Gastrocnemius medialis (tissue), 4 donors: ENCODE measurements at regions of chr2 and their contacts with region 1.

Region 1: GRCh38 chr2:20446917-20447436 is at the start of gene RHOB:
- DNase-seq: peak; percentile 97 to 99
- ATAC-seq: peak; percentile 73 to 84
- H3K4me3 ChIP-seq: peak within 1 kb of the TSS; percentile 86 to 99 (median 94)
- H3K27ac ChIP-seq: peak within 1 kb of the TSS; percentile 87 to 96 (median 91)
- H3K4me1 ChIP-seq: peaks cover 19 to 20% of the 10 kb centered on the region in 2 donors
- H3K27me3 ChIP-seq: no peaks in the 10 kb centered on the region
- CTCF ChIP-seq: peak in 1 of 5 experiments; percentile 4
- POLR2A ChIP-seq: peak; percentile 100
- total RNA-seq, gene RHOB: 696 to 1,267 (median 1,094) TPM

Region 2: DNA sequence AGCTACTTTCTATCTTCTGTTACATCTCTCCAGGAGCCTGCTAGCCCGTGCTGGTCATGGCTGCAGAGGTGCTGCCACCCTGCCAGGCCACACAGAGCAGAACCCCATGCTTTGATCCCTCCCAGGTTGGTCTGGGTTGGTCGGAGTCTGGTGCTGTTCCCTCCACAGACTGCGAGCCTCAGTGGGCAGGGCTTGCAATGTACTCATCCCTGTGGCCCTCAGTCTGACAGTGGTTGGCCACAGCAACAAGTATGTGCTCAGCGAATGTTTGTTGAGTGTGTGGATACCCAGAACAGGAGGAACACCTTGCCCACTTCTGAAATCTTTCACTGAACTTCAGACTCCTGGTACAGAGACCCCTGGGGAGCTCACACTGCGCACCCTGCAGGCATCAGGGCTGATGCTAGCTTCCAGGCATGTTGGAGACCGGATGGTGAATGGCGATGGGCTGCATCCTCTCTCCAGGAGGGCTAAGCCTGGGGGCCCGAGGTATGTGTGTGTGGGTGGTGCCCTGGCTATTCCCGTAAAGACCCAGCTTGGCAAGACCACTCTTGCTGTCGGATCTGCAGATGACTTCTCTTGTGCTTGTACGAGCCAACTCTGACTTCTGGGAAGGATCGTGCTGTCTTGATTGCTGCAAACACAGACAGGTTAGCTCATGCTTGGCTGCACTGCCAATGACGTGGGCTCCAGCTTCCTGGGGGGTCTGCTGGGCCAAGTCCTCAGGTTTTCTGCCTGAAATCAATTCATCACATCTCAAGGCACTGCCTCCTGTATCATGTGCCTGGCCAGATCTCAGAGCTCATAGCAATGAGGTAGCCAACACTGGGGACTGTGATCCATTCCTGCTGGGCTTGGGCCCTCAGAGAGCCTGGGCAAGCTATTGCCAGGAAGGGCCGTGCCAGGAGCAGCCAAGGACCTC is 43.5 kb after region 1 on chr2:
- in situ Hi-C with region 1: no loop called
- intact Hi-C with region 1: loop called (anchors 5 kb)
- DNase-seq: peak; percentile 42 to 70
- ATAC-seq: peak; percentile 61 to 71
- H3K4me3 ChIP-seq: no peak overlapping the region
- H3K27ac ChIP-seq: no peak overlapping the region
- H3K4me1 ChIP-seq: peaks cover 2 to 5% of the 10 kb centered on the region in 2 donors
- H3K27me3 ChIP-seq: no peaks in the 10 kb centered on the region
- CTCF ChIP-seq: no peak
- POLR2A ChIP-seq: no peak

Region 3: GRCh38 chr2:20507166-20507692 is 60.3 kb after region 1 on chr2:
- in situ Hi-C with region 1: no loop called
- intact Hi-C with region 1: no loop called
- DNase-seq: peak in 1 of 2 donors; percentile 36
- ATAC-seq: peak; percentile 82 to 93
- H3K4me3 ChIP-seq: no peak overlapping the region
- H3K27ac ChIP-seq: peak overlapping the region in 1 of 4 donors; percentile 40
- H3K4me1 ChIP-seq: peaks cover 0 to 12% of the 10 kb centered on the region in 2 donors
- H3K27me3 ChIP-seq: no peaks in the 10 kb centered on the region
- CTCF ChIP-seq: no peak
- POLR2A ChIP-seq: no peak

Region 4: DNA sequence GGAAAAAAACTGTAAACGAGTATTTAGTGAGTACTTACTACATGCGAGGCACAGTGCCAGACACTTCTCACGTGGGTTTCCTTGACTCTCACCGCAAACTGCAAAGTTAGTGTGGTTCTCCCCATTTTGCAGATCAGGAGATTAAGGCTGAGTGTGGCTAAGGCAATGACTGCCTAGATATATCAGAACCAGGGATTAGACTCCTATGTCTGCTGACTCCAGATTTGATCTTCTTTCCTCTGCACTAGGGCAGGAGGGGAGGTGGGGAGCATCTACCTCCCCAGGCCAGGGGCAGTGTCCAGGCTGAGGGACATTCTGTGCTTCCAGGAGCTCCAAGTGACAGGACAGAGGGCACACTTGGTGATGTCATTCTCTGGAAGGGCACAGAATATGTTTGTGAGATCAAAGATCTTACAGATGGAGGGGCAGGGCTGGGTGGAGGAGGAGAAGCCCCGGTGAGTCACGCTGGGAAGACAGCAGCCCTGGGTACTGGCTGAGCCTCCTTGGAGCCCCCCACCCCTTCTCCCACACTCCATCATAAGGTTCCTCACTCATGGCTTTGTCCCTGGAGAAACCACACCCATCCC is 92.2 kb after region 1 on chr2:
- in situ Hi-C with region 1: loop called in 1 of 4 experiments (anchors 10 kb)
- intact Hi-C with region 1: loop called (anchors 1 kb)
- DNase-seq: peak; percentile 89
- ATAC-seq: peak; percentile 21 to 31
- H3K4me3 ChIP-seq: peak overlapping the region; percentile 5 to 31 (median 21)
- H3K27ac ChIP-seq: peak overlapping the region; percentile 88 to 96 (median 94)
- H3K4me1 ChIP-seq: peaks cover 73 to 77% of the 10 kb centered on the region in 2 donors
- H3K27me3 ChIP-seq: no peaks in the 10 kb centered on the region
- CTCF ChIP-seq: no peak
- POLR2A ChIP-seq: no peak

Region 5: GRCh38 chr2:20635675-20636584 is 189.0 kb after region 1 on chr2:
- in situ Hi-C with region 1: loop called (anchors 5 kb)
- intact Hi-C with region 1: loop called (anchors 1 kb)
- DNase-seq: peak; percentile 65 to 81
- ATAC-seq: peak; percentile 85 to 89
- H3K4me3 ChIP-seq: peak overlapping the region in 1 of 4 donors; percentile 33
- H3K27ac ChIP-seq: peak overlapping the region; percentile 28 to 60 (median 48)
- H3K4me1 ChIP-seq: peaks cover 6 to 19% of the 10 kb centered on the region in 2 donors
- H3K27me3 ChIP-seq: no peaks in the 10 kb centered on the region
- CTCF ChIP-seq: peak; percentile 96 to 97 (median 96)
- POLR2A ChIP-seq: no peak

Region 6: DNA sequence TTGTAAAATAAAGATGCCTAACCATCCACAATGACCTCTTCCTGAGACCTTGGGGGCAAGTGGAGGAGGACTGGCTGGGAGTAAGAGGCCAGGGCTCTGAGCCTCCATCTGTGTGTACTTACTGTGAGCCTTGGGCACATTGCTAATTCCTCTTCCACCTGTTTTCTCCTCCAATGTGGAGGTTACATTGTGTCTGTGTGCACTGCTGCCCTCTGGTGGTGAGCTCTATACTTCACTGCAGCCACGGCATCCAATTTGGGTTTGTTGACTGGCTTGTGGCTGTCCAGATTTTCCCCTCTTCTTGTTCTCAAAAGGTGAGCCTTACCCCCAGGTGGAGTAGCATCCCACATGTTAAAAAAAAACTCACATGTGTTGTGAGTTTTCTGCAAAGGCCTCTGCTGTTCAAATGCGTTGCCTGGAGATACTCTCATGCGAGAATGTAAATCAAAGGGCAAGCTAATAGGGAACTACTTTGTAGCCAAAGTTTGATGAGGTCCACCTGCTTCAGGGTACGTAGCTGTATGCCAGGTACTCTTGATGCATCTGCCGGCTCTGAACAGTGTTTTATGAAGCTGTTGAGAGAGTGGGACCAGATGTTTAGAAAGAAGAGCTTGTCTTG is 516.1 kb after region 1 on chr2:
- in situ Hi-C with region 1: loop called in 1 of 4 experiments (anchors 25 kb)
- intact Hi-C with region 1: no loop called
- DNase-seq: peak; percentile 40 to 56
- ATAC-seq: peak; percentile 83 to 90
- H3K4me3 ChIP-seq: no peak overlapping the region
- H3K27ac ChIP-seq: no peak overlapping the region
- H3K4me1 ChIP-seq: peaks cover 6 to 9% of the 10 kb centered on the region in 2 donors
- H3K27me3 ChIP-seq: no peaks in the 10 kb centered on the region
- CTCF ChIP-seq: peak; percentile 55 to 86 (median 83)
- POLR2A ChIP-seq: no peak